SK-N-SH (cell line): ENCODE measurements at regions of chr12 and their contacts with region 1.

Region 1: DNA sequence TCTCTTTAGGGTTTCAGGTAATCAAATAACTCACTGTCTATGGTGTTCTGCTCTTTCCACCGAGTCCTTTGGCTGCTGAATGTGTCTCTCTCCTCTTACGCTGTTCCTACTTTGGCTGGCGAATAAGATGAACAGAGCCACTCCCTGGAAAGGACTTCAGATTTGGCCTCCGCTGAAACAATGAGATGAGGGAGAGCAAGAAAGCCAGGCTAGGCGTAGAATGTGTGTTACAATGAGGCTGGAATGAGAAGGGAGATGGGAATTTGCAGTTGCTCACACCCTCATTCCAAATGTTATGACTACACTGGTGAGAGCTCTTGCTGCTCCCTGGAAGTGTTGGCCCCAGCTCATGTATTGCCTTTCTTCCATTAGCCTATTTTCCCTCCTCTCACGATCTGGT is at the start of gene MFAP5:
- DNase-seq: no peak
- H3K4me3 ChIP-seq: no peak within 1 kb of the TSS
- H3K27ac ChIP-seq: no peak within 1 kb of the TSS; a peak in 1 of 4 replicates
- H3K4me1 ChIP-seq: no peaks in the 10 kb centered on the region
- H3K27me3 ChIP-seq: no peaks in the 10 kb centered on the region; the same call in 1 of the 2 replicates
- CTCF ChIP-seq: no peak
- EP300 ChIP-seq: no peak
- RAD21 ChIP-seq: no peak
- polyA plus RNA-seq, gene MFAP5: 19.1 and 34.8 TPM in 2 replicates

Region 2: DNA sequence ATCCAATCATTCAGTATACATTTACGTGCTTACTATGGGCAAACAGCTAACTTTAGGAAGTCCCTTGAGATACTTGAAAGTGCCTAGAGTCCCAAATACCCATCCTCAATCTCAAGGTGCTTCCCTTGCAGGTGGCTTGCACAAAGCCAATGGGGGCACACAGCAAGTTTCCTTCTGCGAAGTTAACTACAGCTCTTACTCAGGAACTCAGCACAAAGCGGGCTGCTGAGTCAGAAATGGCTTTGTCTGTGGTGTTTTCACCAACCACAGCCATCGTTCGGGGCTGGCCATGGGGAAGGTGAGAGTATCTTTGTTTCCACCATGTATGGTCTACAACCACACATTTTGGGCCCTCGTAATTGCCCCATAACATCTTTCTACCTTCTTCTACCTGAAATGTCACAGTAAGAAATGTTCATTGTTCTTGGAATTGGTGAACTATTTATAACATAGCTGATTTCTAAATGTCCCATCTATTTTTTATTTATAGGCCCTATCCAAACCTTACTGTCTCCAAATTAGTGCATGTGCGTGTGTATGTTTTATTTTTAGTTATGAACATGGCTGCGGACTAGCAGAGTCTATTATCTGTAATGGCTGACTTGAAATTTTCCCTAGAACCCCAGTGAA is 13.9 kb before region 1 on chr12:
- CTCF ChIA-PET with region 1: interaction called, 14 read pairs
- POLR2A ChIA-PET with region 1: no interaction called
- DNase-seq: no peak
- H3K4me3 ChIP-seq: no peak overlapping the region
- H3K27ac ChIP-seq: no peak overlapping the region
- H3K4me1 ChIP-seq: no peaks in the 10 kb centered on the region
- H3K27me3 ChIP-seq: peaks cover 10% of the 10 kb centered on the region; the same call in 1 of the 2 replicates
- CTCF ChIP-seq: no peak
- EP300 ChIP-seq: no peak
- RAD21 ChIP-seq: no peak

Region 3: GRCh38 chr12:8675591-8676036 is 13.0 kb after region 1 on chr12:
- CTCF ChIA-PET with region 1: interaction called, 17 read pairs
- POLR2A ChIA-PET with region 1: no interaction called
- DNase-seq: no peak
- H3K4me3 ChIP-seq: no peak overlapping the region
- H3K27ac ChIP-seq: no peak overlapping the region
- H3K4me1 ChIP-seq: no peaks in the 10 kb centered on the region; a peak in 1 of 4 replicates
- H3K27me3 ChIP-seq: no peaks in the 10 kb centered on the region; the same call in 1 of the 2 replicates
- CTCF ChIP-seq: no peak
- EP300 ChIP-seq: no peak
- RAD21 ChIP-seq: no peak